Natural killer cell (primary cell): ENCODE measurements at regions of chr5 and their contacts with region 1.

Region 1: DNA sequence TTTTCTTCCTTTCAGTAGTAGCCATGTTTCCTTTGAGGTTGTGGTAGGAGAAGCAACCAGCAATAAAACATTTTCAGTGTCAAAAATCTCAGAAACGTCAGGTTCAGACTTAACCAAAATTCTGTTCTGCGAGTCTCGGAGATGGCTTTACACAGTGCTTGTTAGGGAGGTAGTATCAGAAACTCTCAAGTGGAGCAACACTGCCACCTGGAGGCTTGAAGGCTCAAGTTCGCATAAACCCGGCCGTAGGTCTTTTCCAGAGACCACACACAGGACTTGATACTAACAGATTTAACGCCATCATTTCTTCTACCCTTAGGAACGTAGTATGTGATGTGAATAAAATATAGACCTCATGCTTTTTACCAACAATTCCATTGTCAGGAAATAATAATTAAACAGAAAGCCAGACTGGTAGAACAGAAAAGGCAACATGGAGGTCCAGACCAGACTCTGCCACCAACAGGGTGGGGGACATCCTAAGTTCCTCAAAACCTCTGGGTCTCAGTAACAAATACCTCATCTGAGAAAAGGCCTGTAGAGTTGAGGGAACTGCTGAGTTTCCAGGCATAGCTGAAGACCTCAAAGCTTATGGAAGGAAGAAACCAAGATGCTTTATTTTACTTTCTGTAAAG is 8.5 kb downstream of the PTGER4 start:
- DNase-seq: peak; percentile 78 to 96
- ATAC-seq: peak; percentile 77 to 89 (median 81)
- H3K4me3 ChIP-seq: no peak overlapping the region
- H3K4me3 Mint-ChIP-seq: peak overlapping the region; percentile 89
- H3K27ac ChIP-seq: peak overlapping the region; percentile 45
- H3K27ac Mint-ChIP-seq: peak overlapping the region; percentile 91 to 95
- H3K4me1 ChIP-seq: peaks cover 32% of the 10 kb centered on the region
- H3K4me1 Mint-ChIP-seq: peaks cover 84 to 92% of the 10 kb centered on the region in 2 donors
- H3K27me3 ChIP-seq: no peaks in the 10 kb centered on the region
- H3K27me3 Mint-ChIP-seq: no peaks in the 10 kb centered on the region
- CTCF ChIP-seq: peak; percentile 78

Region 2: DNA sequence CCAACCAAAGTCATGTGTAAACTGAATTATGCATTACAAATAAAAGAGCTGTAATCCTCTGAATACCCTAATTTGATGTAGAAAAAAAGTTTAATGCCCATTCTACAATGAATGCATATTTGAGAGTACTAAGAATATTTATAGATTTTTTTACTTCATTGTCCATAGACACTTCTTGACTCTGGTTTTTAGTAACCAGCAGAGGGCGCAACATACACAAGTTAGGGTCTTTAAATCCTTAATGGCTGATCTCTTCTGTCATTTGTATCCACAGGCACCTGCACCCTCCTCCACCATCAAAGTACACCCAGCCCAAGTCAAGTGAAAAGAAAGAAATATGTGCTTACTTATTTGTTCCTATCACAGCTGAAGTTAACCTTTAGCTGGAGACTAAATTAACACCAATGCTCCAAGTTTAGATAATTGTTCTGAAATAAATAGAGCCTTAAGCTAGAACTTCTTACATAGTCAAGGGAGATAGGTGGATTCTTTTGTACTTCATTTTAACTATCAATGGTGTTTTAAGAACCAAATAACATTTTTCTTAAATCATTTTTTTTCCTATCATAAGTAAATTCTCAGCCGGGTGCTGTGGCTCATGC is 739.3 kb before region 1 on chr5:
- intact Hi-C with region 1: loop called (anchors 1 kb)
- DNase-seq: peak; percentile 15 to 87
- ATAC-seq: peak; percentile 87 to 90 (median 89)
- H3K4me3 ChIP-seq: no peak overlapping the region
- H3K4me3 Mint-ChIP-seq: no peak overlapping the region
- H3K27ac ChIP-seq: no peak overlapping the region
- H3K27ac Mint-ChIP-seq: no peak overlapping the region
- H3K4me1 ChIP-seq: no peaks in the 10 kb centered on the region
- H3K4me1 Mint-ChIP-seq: peaks cover 0 to 4% of the 10 kb centered on the region in 2 donors
- H3K27me3 ChIP-seq: no peaks in the 10 kb centered on the region
- H3K27me3 Mint-ChIP-seq: no peaks in the 10 kb centered on the region
- CTCF ChIP-seq: peak; percentile 82

Region 3: DNA sequence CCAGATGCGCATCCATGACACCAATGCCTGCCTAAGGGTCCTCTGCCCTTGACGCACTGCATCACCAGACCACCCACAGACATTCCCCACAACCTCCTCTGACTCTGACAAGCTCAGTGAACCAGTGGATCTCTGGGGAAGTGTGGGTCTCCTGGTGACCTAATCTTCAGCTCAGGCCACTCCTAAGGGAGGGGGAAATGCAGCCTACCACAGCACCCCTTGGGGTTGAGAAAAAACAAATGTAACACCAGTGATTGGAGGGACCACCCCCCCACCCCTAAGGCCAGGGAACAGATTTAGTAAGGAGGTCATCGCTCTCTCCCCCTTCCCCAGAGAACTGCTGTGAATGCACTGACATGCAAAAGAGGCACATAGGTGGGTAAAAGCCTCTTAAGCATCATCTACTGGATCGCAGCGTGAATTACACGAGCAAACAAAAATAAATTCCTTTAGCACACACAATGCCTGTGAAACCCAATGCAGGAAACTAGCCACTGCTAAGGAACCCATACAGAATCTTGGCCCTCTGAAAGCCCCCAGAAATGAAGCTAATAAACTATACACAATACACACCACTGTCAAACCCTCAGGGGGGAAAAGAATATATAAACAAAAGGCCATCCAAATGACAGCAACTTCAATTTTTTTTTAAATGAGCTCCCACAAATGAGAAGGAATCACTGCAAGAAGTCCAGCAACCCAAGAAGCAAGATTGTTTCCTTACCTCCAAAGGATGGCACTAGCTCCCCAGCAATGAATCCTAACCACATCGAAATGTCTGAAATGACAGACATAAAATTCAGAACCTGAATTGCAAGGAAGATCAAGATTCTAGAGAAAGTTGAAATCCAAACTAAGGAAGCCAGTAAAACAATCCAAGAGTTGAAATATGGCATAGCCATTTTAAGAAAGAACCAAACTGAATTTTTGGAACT is 522.2 kb before region 1 on chr5:
- intact Hi-C with region 1: loop called (anchors 1 kb)
- DNase-seq: peak in 1 of 2 donors; percentile 48
- ATAC-seq: no peak
- H3K4me3 ChIP-seq: no peak overlapping the region
- H3K4me3 Mint-ChIP-seq: no peak overlapping the region
- H3K27ac ChIP-seq: no peak overlapping the region
- H3K27ac Mint-ChIP-seq: peak overlapping the region in 1 of 2 donors; percentile 12
- H3K4me1 ChIP-seq: no peaks in the 10 kb centered on the region
- H3K4me1 Mint-ChIP-seq: peaks cover 0 to 4% of the 10 kb centered on the region in 2 donors
- H3K27me3 ChIP-seq: no peaks in the 10 kb centered on the region
- H3K27me3 Mint-ChIP-seq: peaks cover 5 to 7% of the 10 kb centered on the region in 2 donors
- CTCF ChIP-seq: no peak

Region 4: GRCh38 chr5:40410231-40410861 is 277.9 kb before region 1 on chr5:
- intact Hi-C with region 1: loop called (anchors 10 kb)
- DNase-seq: peak; percentile 52 to 95
- ATAC-seq: peak; percentile 83 to 92 (median 89)
- H3K4me3 ChIP-seq: no peak overlapping the region
- H3K4me3 Mint-ChIP-seq: peak overlapping the region; percentile 78
- H3K27ac ChIP-seq: peak overlapping the region; percentile 95
- H3K27ac Mint-ChIP-seq: peak overlapping the region; percentile 88 to 95
- H3K4me1 ChIP-seq: peaks cover 33% of the 10 kb centered on the region
- H3K4me1 Mint-ChIP-seq: peaks cover 57 to 62% of the 10 kb centered on the region in 2 donors
- H3K27me3 ChIP-seq: no peaks in the 10 kb centered on the region
- H3K27me3 Mint-ChIP-seq: no peaks in the 10 kb centered on the region
- CTCF ChIP-seq: no peak

Region 5: GRCh38 chr5:40755407-40756365 is 67.4 kb after region 1 on chr5 and contains the start of gene TTC33:
- intact Hi-C with region 1: loop called (anchors 2 kb)
- DNase-seq: peak; percentile 89 to 95
- ATAC-seq: peak; percentile 90 to 97 (median 94)
- H3K4me3 ChIP-seq: peak within 1 kb of the TSS; percentile 75
- H3K4me3 Mint-ChIP-seq: no peak within 1 kb of the TSS
- H3K27ac ChIP-seq: peak within 1 kb of the TSS; percentile 68
- H3K27ac Mint-ChIP-seq: no peak within 1 kb of the TSS
- H3K4me1 ChIP-seq: peaks cover 5% of the 10 kb centered on the region
- H3K4me1 Mint-ChIP-seq: peaks cover 22 to 24% of the 10 kb centered on the region in 2 donors
- H3K27me3 ChIP-seq: no peaks in the 10 kb centered on the region
- H3K27me3 Mint-ChIP-seq: no peaks in the 10 kb centered on the region
- CTCF ChIP-seq: peak; percentile 57
- total RNA-seq, gene TTC33: 7.3 to 11.4 (median 10.0) TPM